Heart right ventricle (tissue), 16 donors: ENCODE measurements at regions of chr13 and their contacts with region 1.

Region 1: GRCh38 chr13:52652196-52652979 is at the start of gene SUGT1:
- DNase-seq: peak; percentile 97 to 98
- ATAC-seq: peak; percentile 99 to 100 (median 100)
- H3K4me3 ChIP-seq: peak within 1 kb of the TSS; percentile 57 to 84 (median 74)
- H3K27ac ChIP-seq: peak within 1 kb of the TSS; percentile 86 to 98 (median 97)
- H3K4me1 ChIP-seq: peaks cover 0 to 49% (median 42%) of the 10 kb centered on the region in 9 donors
- H3K27me3 ChIP-seq: no peaks in the 10 kb centered on the region
- CTCF ChIP-seq: peak; percentile 36 to 78 (median 62)
- total RNA-seq, gene SUGT1: 44.3 to 61.7 (median 53.9) TPM

Region 2: DNA sequence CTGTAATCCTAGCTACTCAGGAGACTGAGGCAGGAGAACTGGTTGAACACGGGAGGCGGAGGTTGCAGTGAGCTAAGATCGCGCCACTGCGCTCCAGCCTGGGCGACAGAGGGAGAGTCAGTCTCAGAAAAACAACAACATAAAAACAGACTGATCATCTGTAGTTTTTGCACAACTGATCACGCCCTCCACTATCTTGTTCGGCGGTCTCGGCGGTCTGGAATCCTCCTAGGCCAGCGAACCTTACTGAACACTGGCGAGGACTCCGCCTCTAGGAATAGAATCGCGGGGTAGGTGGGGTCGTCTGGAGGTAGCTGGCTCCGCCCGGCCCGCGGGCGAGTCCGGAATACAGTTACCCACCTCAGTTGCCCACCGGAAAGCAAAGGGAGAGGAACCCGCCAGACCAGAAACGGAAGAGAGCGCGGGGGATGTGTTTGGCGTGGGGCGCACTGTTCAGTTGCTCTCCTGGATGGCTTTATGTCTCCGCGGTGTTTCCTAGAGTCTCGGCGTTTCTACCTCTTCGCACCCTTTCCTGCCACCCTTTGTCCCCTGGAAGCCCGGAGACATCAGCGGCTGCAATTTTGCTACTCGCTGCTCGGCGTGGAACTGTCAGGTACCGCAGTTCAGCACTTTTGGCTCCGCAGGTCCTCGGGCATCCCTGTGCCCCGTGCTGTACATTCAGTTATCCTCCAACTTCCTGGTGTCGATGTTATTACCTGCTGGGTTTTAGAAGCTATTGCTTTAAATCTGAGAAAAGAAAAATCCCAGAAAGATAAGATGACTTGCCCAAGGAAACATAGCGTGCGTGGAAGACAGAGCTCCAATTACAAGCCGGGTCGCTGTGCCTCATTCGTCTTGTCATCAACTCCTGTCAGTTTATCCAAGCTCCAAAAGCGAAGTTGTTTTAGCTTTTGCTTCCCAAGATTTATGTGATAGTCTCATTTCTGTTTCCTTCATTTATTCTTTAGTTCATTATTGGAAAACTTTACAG is 35.0 kb before region 1 on chr13:
- intact Hi-C with region 1: loop called in 6 of 10 experiments (anchors 1 to 5 kb)
- DNase-seq: peak; percentile 70 to 85
- ATAC-seq: peak; percentile 96 to 99 (median 99)
- H3K4me3 ChIP-seq: peak overlapping the region; percentile 38 to 85 (median 76)
- H3K27ac ChIP-seq: peak overlapping the region; percentile 2 to 89 (median 78)
- H3K4me1 ChIP-seq: peaks cover 0 to 26% (median 4%) of the 10 kb centered on the region in 9 donors
- H3K27me3 ChIP-seq: no peaks in the 10 kb centered on the region
- CTCF ChIP-seq: no peak